HepG2 (cell line): ENCODE measurements at regions of chr18 and their contacts with region 1.

Region 1: GRCh38 chr18:35459005-35459441 is 38.7 kb downstream of the INO80C start:
- DNase-seq: peak; percentile 86
- ATAC-seq: peak; percentile 99
- H3K4me3 ChIP-seq: no peak overlapping the region
- H3K27ac ChIP-seq: no peak overlapping the region
- H3K4me1 ChIP-seq: peaks cover 35% of the 10 kb centered on the region
- H3K27me3 ChIP-seq: no peaks in the 10 kb centered on the region
- CTCF ChIP-seq: peak; percentile 28; the same call in 1 of the 2 replicates
- EP300 ChIP-seq: peak in 1 of 2 experiments; percentile 42; a peak in 2 of 4 replicates
- POLR2A ChIP-seq: no peak
- RAD21 ChIP-seq: no peak

Region 2: DNA sequence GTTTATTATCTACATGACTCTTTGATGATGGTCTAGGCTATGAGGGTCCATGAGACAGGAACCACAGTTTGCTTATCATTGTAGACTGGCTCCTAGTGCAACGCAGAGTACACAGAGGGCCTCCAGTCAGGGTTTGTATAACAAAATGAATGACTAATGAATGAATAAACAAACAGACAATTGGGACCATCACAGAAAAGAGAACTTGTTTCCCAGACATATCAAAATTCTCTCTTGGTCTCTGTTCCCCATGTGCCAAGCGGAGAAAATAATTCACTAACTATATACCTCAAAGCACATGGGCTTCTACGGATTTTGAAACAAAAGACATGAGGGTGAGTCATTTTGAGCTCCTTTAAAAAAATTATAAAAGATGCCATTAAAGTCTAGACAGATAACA is 10.7 kb after region 1 on chr18:
- CTCF ChIA-PET with region 1: no interaction called
- POLR2A ChIA-PET with region 1: no interaction called
- in situ Hi-C with region 1: no loop called
- intact Hi-C with region 1: loop called (anchors 1 kb)
- DNase-seq: peak; percentile 86
- ATAC-seq: peak; percentile 90
- H3K4me3 ChIP-seq: no peak overlapping the region
- H3K27ac ChIP-seq: peak overlapping the region; percentile 39
- H3K4me1 ChIP-seq: peaks cover 24% of the 10 kb centered on the region
- H3K27me3 ChIP-seq: no peaks in the 10 kb centered on the region
- CTCF ChIP-seq: no peak
- EP300 ChIP-seq: peak in 1 of 2 experiments; percentile 77; a peak in 2 of 4 replicates
- POLR2A ChIP-seq: no peak
- RAD21 ChIP-seq: no peak

Region 3: GRCh38 chr18:35770376-35771014 is 311.5 kb after region 1 on chr18:
- CTCF ChIA-PET with region 1: no interaction called
- POLR2A ChIA-PET with region 1: no interaction called
- in situ Hi-C with region 1: no loop called
- intact Hi-C with region 1: no loop called
- DNase-seq: no peak
- ATAC-seq: no peak
- H3K4me3 ChIP-seq: no peak overlapping the region
- H3K27ac ChIP-seq: no peak overlapping the region
- H3K4me1 ChIP-seq: no peaks in the 10 kb centered on the region
- H3K27me3 ChIP-seq: 0 out of 5 replicates have a peak, but pooled peaks cover 0 to 1% of the 10 kb centered on the region in 2 experiments
- CTCF ChIP-seq: no peak
- EP300 ChIP-seq: no peak
- POLR2A ChIP-seq: no peak
- RAD21 ChIP-seq: no peak